AG04449 (cell line): ENCODE measurements at regions of chr1 and their contacts with region 1.

Region 1: DNA sequence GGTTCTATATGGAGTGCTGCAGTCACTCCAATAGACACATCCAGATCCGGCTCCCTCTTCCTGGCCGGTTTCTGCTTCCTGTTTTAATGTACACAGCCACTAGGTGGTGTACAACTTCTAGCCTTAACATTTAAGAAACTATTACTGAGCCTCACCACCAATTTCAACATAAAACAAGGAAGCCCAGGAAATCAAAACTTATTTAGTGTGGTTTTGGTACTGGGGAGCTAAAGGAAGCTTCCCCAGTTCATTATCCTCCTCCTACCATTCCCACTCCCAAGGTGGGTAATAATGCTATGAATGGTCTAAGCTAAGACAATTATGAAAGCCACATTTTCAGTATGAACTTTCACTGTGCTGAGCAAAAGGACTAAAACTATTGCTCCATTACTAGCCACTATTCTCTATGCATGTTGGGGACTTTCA is 25.5 kb upstream of the MTMR11 start:
- DNase-seq: peak; percentile 41
- H3K4me3 ChIP-seq: no peak overlapping the region
- CTCF ChIP-seq: peak; percentile 53

Region 2: DNA sequence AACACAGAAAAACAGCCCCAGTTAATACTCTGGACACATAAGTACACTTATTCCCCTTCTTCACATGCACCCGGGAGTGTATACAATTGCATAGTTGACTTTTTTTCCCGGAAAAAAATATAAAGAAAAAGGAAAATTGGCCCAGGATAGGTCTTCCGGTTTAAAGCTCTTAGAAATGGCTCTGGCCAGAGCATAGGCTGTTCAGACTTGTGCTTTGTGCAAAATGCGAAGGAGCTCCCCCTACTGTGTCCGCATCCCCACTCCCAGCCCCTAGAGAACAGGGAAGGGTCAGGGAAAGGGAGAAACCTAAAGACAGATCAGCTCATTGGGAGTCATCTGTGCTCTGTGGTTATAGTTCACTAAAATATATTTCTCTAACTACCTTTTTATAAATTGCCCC is 19.9 kb before region 1 on chr1:
- CTCF ChIA-PET with region 1: interaction called, 39 read pairs
- POLR2A ChIA-PET with region 1: no interaction called
- DNase-seq: no peak
- H3K4me3 ChIP-seq: no peak overlapping the region
- CTCF ChIP-seq: peak; percentile 19

Region 3: DNA sequence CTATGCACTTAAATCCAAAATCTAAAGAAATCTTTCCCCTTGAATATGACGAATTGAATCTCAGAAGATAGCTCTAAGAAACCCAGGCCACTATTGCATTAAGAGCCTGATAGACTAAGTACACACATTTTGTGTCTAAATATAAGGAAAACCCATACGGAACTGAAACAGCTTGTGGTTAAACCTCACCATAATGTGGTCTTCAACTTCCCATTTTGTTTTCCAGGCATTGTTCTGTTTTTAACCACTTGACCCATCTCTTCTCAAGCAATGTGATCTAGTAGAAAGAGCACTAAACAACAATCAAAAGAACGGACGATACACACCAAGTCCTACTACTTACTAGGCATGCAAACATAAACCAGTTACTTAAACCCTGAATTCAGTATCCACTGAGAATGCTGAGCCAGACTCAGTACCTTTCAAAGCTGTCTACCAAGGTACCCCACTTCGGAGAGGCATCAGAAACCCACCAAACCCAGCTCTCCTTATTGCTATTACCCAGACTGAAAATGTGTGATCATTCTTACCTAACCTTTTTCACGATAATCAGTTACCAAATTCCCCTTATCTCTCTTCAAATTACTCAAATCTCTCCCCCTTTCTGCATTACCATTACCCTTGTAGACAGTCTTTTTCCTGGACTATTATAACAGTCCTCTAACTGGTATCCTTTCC is 35.6 kb after region 1 on chr1:
- CTCF ChIA-PET with region 1: interaction called, 18 read pairs
- POLR2A ChIA-PET with region 1: no interaction called
- DNase-seq: no peak
- H3K4me3 ChIP-seq: no peak overlapping the region
- CTCF ChIP-seq: no peak

Region 4: DNA sequence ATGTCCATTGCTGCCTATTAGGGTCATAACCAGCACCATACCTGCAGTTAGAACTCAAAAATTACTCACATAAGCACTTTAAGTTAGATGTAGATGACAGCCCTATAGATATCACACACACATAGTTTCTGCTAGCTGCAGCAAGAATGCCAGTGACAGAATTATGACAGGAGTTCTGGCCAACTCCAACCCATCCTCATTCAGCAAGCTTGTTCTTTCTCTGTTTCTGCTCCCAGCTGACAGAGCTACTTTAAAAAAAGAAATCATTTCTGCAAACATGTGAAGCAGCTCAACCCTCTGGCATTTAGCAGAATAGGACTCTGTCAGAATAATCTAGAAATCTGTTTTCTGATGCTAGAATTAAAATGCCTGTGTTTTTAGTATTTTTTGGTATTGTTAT is 72.2 kb after region 1 on chr1:
- CTCF ChIA-PET with region 1: interaction called, 11 read pairs
- POLR2A ChIA-PET with region 1: no interaction called
- DNase-seq: no peak
- H3K4me3 ChIP-seq: no peak overlapping the region
- CTCF ChIP-seq: no peak

Region 5: GRCh38 chr1:150067184-150068036 is 105.3 kb after region 1 on chr1 and contains the start of gene VPS45:
- CTCF ChIA-PET with region 1: interaction called, 16 read pairs
- POLR2A ChIA-PET with region 1: interaction called, 4 read pairs
- DNase-seq: peak; percentile 42
- H3K4me3 ChIP-seq: peak within 1 kb of the TSS; percentile 79
- CTCF ChIP-seq: peak; percentile 12

Region 6: GRCh38 chr1:150121236-150121862 is 159.2 kb after region 1 on chr1:
- CTCF ChIA-PET with region 1: no interaction called
- POLR2A ChIA-PET with region 1: no interaction called
- DNase-seq: no peak
- H3K4me3 ChIP-seq: no peak overlapping the region
- CTCF ChIP-seq: no peak

Region 7: DNA sequence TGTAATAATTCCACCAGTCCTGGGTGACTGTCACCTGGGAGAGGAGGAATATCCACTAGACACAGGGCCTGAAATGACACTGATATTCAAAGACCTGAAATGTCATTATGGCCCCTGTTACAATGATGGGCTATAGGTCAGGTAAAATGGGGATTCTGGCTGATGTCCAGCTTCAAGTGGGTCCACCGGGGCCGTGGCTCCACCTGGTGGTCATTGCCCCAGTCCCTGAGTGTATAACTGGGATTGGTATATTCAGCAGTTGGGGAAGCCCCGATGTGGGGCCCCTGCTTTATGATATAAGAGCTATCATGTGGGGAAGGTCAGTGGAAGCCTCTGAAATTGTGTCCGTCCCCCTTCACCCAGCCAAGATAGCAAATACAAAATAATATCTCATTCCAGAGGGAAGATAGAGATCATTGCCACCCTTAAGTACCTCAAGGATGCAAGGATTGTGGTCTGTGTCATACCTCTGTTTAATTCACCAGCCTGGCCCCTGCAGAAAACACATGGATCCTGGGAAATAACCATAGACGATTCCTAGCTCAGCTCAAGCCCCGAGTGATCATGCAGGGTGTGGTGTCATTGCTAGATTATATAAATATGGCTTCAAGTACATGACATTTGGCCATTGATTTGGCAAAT is 206.9 kb after region 1 on chr1:
- CTCF ChIA-PET with region 1: interaction called, 47 read pairs
- POLR2A ChIA-PET with region 1: no interaction called
- DNase-seq: no peak
- H3K4me3 ChIP-seq: no peak overlapping the region
- CTCF ChIP-seq: peak; percentile 85

Region 8: DNA sequence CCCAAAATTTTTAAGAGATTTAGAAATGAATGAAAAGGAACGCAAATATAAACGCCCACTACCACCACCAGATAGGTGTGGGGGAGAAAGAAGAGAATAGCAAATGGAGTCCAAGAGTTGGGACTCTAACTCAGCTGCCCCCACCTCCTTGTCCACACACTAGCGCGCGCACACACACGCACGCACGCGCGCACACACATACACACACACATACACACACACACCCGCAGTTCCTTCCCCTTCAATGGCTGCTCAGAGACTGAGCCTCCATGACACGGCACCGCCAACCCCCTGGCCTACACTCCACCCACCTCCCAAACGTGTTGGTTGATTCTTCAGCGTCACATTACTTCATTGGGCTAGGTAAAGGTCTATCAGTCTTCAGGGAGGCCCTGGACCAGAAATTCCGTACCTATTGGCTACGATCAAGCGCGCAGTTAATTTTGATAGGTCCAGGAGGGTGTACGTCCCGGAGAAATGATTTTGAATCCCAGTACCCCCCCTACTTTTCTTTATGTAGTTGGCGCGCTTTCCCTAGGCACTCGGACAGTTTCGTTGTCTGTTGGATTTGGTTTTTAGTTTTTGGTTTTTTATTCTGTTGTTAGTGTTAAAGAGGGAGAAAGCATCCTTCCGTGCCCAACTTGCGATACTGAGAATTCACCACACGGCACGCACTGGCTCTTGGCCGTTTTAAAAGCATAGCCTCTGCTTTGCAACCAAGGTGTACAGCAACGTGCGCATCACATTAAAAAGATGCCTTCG is 273.9 kb after region 1 on chr1 and contains the start of gene ANP32E:
- CTCF ChIA-PET with region 1: no interaction called
- POLR2A ChIA-PET with region 1: no interaction called
- DNase-seq: peak; percentile 98
- H3K4me3 ChIP-seq: peak within 1 kb of the TSS; percentile 89
- CTCF ChIP-seq: no peak